Activated B cell treated with CpG ODN at 0.5 μM for 24 hours (primary cell): ENCODE measurements at regions of chr19 and their contacts with region 1.

Region 1: DNA sequence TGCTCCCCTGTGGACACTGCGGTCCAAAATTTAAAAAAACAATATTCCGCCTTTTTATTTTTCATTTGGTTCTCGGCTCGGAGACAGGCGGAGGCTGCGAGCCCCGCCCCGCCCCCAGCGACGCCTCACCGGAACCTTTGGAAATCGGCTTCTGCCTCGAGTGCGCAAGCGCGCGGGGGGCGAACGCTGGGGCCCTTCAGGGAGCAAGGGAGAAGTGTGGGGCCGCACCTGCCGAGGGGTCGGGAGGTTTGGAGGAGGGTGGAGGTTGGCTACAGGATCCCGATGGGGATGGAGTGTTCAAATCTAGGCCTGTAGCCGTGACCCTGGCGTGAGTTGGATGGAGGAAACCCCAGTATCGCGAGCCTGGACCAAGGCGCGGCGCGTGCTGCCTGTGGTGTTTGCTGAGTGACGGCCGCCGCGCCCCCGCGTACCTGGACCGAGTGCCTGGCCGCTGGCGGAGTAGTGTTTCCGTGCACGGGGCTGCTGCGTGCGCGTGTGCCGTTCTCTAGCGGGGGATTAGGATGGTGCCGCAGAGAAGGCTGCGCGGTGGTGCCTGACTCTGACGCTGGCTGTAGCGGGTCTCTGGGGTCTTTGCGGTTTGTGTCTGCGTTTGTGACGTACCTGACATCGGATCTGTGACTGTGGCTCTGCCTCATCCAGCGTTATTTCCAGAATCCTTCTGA is 565 bp upstream of the ZFP30 start:
- DNase-seq: peak; percentile 80
- ATAC-seq: peak; percentile 67
- H3K4me3 Mint-ChIP-seq: peak overlapping the region; percentile 95
- H3K27ac Mint-ChIP-seq: peak overlapping the region; percentile 95
- H3K4me1 Mint-ChIP-seq: peaks cover 28% of the 10 kb centered on the region
- H3K27me3 Mint-ChIP-seq: no peaks in the 10 kb centered on the region
- CTCF ChIP-seq: no peak

Region 2: GRCh38 chr19:37492213-37492612 is 163.6 kb before region 1 on chr19:
- CTCF ChIA-PET with region 1: no interaction called
- POLR2A ChIA-PET with region 1: no interaction called
- intact Hi-C with region 1: no loop called
- DNase-seq: no peak
- ATAC-seq: no peak
- H3K4me3 Mint-ChIP-seq: no peak overlapping the region
- H3K27ac Mint-ChIP-seq: no peak overlapping the region
- H3K4me1 Mint-ChIP-seq: no peaks in the 10 kb centered on the region
- H3K27me3 Mint-ChIP-seq: no peaks in the 10 kb centered on the region
- CTCF ChIP-seq: no peak

Region 3: GRCh38 chr19:37691881-37692504 is 36.2 kb after region 1 on chr19:
- CTCF ChIA-PET with region 1: no interaction called
- POLR2A ChIA-PET with region 1: interaction called, 3 read pairs
- intact Hi-C with region 1: loop called (anchors 1 kb)
- DNase-seq: peak; percentile 69
- ATAC-seq: peak; percentile 94
- H3K4me3 Mint-ChIP-seq: peak overlapping the region; percentile 94
- H3K27ac Mint-ChIP-seq: peak overlapping the region; percentile 86
- H3K4me1 Mint-ChIP-seq: peaks cover 10% of the 10 kb centered on the region
- H3K27me3 Mint-ChIP-seq: no peaks in the 10 kb centered on the region
- CTCF ChIP-seq: no peak

Region 4: DNA sequence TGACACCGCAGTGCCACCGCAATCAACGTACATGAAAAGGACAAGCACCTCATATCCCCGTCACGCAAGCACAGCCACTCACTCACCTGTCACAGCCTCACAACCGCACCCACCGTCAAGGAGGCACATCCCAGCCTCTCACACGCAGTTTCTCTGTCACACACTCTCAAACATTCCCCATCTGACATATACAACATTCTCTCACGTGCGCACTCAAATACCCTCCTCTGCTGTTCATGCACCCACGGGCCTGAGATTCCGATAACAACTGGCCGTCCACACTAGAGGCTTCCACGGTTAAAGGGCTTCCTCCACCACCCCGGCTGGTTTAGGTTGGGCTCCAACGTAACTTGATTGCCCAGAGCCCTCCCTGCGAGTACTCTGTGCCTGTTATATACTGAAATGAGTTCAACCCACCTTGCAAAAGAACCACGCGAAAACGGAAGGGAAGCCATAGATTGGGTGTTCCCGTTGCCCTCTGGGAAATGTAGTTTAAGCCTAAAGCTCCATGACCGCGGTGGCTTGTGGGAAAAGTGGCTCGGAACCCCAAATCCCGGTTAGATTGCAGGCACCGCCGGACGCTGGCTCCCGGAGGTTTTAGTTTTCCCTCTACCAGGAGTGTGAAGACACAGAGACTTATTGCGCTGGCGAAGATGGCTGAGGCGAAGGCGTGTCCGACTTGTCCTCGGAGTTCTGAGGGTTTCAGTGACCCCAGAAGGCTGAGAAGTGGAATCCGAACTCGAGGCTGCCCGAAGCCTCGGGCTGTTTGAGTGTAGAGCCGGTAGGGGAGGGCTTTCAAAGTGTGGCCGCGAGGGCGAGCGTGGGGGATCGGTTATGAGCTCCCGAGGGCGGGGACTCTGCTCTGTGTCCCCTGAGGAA is 123.5 kb after region 1 on chr19 and contains the start of gene ZNF573:
- CTCF ChIA-PET with region 1: no interaction called
- POLR2A ChIA-PET with region 1: interaction called, 4 read pairs
- intact Hi-C with region 1: loop called (anchors 1 kb)
- DNase-seq: peak; percentile 70
- ATAC-seq: peak; percentile 86
- H3K4me3 Mint-ChIP-seq: peak within 1 kb of the TSS; percentile 91
- H3K27ac Mint-ChIP-seq: peak within 1 kb of the TSS; percentile 96
- H3K4me1 Mint-ChIP-seq: peaks cover 31% of the 10 kb centered on the region
- H3K27me3 Mint-ChIP-seq: no peaks in the 10 kb centered on the region
- CTCF ChIP-seq: no peak
- total RNA-seq, gene ZNF573: 18.7 and 19.8 TPM in 2 replicates